ENCODE measurements at regions of chr19 and their contacts with region 1.

Region 1: GRCh38 chr19:1082172-1082927 is 12.8 kb downstream of the POLR2E start:
- DNase-seq: peak; percentile 92
- H3K4me3 Mint-ChIP-seq: no peak overlapping the region
- H3K27ac Mint-ChIP-seq: no peak overlapping the region
- H3K4me1 Mint-ChIP-seq: peaks cover 54% of the 10 kb centered on the region
- H3K27me3 Mint-ChIP-seq: no peaks in the 10 kb centered on the region

Region 2: GRCh38 chr19:1094975-1095701 is 12.8 kb after region 1 on chr19 and contains the start of gene POLR2E:
- CTCF ChIA-PET with region 1: interaction called, 5 read pairs
- POLR2A ChIA-PET with region 1: interaction called, 26 read pairs
- intact Hi-C with region 1: loop called (anchors 1 kb)
- DNase-seq: peak; percentile 98
- H3K4me3 Mint-ChIP-seq: peak within 1 kb of the TSS; percentile 93
- H3K27ac Mint-ChIP-seq: peak within 1 kb of the TSS; percentile 91
- H3K4me1 Mint-ChIP-seq: peaks cover 58% of the 10 kb centered on the region
- H3K27me3 Mint-ChIP-seq: no peaks in the 10 kb centered on the region
- total RNA-seq, gene POLR2E: 204 to 207 TPM

Measured in activated CD4-positive, alpha-beta memory T cell treated with anti-CD3 and anti-CD28 coated beads for 36 hours (primary cell).